Endothelial cell of umbilical vein (primary cell): ENCODE measurements at regions of chr3 and their contacts with region 1.

Region 1: GRCh38 chr3:43632269-43632733 is 10.5 kb upstream of the ANO10 start:
- DNase-seq: peak; percentile 77
- H3K4me3 ChIP-seq: no peak overlapping the region
- H3K27ac ChIP-seq: peak overlapping the region; percentile 69
- H3K4me1 ChIP-seq: peaks cover 14% of the 10 kb centered on the region
- H3K27me3 ChIP-seq: no peaks in the 10 kb centered on the region
- CTCF ChIP-seq: no peak
- POLR2A ChIP-seq: no peak

Region 2: DNA sequence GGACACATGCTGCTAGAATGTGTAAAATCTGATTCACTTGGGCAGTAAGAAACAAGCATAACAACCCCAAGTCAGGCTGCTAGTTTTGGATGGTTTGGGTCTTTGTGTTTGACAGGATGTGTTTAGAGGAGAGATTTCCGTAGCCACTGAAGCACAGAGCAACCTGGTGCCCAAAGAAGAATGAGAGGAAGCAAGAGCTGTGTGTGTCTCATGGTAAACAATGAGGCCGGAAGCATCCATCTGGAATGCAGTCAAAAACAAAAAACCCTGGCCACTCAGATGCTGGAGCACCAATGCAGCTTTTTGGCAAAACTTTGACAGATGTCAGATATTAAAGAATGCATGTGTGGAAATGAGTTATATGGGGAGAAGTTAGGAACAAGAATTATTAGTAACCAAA is 385.3 kb before region 1 on chr3:
- CTCF ChIA-PET with region 1: no interaction called
- POLR2A ChIA-PET with region 1: no interaction called
- dilution Hi-C with region 1: no loop called
- intact Hi-C with region 1: loop called (anchors 1 kb)
- DNase-seq: peak; percentile 97
- H3K4me3 ChIP-seq: no peak overlapping the region
- H3K27ac ChIP-seq: peak overlapping the region; percentile 99
- H3K4me1 ChIP-seq: peaks cover 47% of the 10 kb centered on the region
- H3K27me3 ChIP-seq: no peaks in the 10 kb centered on the region
- CTCF ChIP-seq: no peak
- POLR2A ChIP-seq: peak; percentile 55

Region 3: DNA sequence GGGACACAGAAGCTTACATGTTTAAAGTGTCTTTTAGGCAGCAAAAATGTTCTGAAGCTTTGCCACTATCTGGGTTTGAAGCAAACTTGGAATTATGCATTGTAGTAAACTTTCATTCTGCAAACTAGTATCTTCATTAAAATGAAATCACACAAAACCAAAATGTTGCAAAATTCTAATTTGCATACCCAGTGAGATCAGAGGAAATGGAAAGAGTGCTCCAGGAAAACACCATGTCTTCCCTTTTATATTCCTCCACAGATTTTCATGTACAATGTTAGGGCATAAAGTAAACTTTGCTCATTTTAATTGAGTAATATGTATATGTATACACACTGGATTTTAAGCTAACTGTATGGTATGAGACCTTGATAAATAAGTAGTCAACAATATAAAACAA is 34.3 kb before region 1 on chr3:
- CTCF ChIA-PET with region 1: no interaction called
- POLR2A ChIA-PET with region 1: no interaction called
- dilution Hi-C with region 1: no loop called
- intact Hi-C with region 1: no loop called
- DNase-seq: no peak
- H3K4me3 ChIP-seq: no peak overlapping the region
- H3K27ac ChIP-seq: no peak overlapping the region
- H3K4me1 ChIP-seq: no peaks in the 10 kb centered on the region
- H3K27me3 ChIP-seq: no peaks in the 10 kb centered on the region
- CTCF ChIP-seq: no peak
- POLR2A ChIP-seq: no peak

Region 4: GRCh38 chr3:43621656-43622432 is 10.5 kb before region 1 on chr3 and contains the start of gene ANO10:
- CTCF ChIA-PET with region 1: interaction called, 12 read pairs
- POLR2A ChIA-PET with region 1: no interaction called
- dilution Hi-C with region 1: no loop called
- intact Hi-C with region 1: loop called (anchors 1 kb)
- DNase-seq: peak; percentile 99
- H3K4me3 ChIP-seq: peak within 1 kb of the TSS; percentile 75 to 83 (median 81)
- H3K27ac ChIP-seq: peak within 1 kb of the TSS; percentile 63
- H3K4me1 ChIP-seq: peaks cover 10% of the 10 kb centered on the region
- H3K27me3 ChIP-seq: no peaks in the 10 kb centered on the region
- CTCF ChIP-seq: no peak
- POLR2A ChIP-seq: peak; percentile 69
- total RNA-seq, gene ANO10: 40.9 and 45.8 TPM in 2 replicates